Caco-2 (cell line): ENCODE measurements at regions of chr20 and their contacts with region 1.

Region 1: DNA sequence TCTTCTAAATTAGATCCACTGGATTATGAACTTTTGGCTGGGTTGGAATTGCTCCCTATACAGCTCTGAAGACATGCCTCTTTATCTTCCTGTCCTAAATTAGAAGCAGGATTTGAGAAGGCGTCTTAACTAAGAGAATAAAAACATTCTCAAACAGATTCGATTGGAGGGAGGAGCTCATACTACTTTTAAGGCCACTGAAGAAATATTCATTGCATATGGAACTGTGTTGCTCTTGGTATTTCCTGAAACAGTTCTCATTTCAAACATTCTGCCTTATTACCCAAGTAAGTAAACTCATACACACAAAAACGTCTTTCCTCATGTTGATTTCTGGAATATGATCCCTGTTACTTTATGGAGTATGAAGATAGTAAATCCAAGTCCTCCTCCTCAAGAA is 519.7 kb upstream of the CDH4 start:
- DNase-seq: no peak
- H3K4me3 ChIP-seq: no peak overlapping the region
- H3K4me3 Mint-ChIP-seq: no peak overlapping the region
- H3K27ac Mint-ChIP-seq: no peak overlapping the region
- H3K4me1 ChIP-seq: no peaks in the 10 kb centered on the region
- H3K4me1 Mint-ChIP-seq: no peaks in the 10 kb centered on the region
- H3K27me3 ChIP-seq: no peaks in the 10 kb centered on the region
- H3K27me3 Mint-ChIP-seq: peaks cover 10% of the 10 kb centered on the region
- CTCF ChIP-seq: no peak

Region 2: DNA sequence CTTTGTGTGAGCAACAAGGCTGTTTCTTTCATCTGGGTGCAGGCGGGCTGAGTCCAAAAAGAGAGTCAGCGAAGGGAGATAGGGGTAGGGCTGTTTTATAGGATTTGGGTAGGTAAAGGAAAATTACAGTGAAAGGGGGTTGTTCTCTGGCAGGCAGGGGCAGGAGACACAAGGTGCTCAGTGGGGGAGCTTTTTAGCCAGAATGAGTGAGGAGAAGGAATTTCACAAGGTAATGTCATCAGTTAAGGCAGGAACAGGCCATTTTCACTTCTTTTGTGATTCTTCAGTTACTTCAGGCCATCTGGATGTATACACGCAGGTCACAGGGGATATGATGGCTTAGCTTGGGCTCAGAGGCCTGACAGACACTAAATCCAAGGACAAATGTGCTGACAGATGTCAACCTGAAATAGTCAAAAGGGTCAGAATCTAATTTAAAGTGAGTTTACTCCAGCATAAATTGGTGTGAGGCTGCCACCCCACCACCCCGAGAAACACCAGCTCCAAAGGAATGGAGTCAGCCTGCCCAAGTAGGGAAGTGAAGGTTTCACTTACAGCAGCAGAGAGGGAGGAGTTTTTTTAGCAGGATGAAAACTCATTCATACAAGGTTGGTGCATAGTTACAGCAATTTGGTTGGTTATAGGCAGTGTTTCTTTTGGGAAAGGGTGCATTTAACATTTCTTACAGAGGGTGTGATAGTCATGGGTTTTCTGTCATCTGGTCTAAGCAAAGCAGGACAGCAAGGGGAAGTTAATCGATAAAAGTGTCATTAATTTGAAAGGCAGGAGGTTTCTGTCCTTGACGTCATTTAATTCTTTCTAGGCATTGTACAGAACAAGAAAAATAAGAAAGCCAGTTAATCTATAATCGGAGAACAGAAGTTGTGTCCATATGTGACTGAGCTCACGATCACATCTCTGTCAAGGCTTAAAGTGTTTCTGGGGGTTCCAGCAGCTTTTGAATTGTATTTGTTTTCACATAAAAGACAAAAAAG is 40.1 kb before region 1 on chr20:
- CTCF ChIA-PET with region 1: no interaction called
- POLR2A ChIA-PET with region 1: no interaction called
- intact Hi-C with region 1: loop called (anchors 1 kb)
- DNase-seq: no peak
- H3K4me3 ChIP-seq: no peak overlapping the region
- H3K4me3 Mint-ChIP-seq: no peak overlapping the region
- H3K27ac Mint-ChIP-seq: no peak overlapping the region
- H3K4me1 ChIP-seq: no peaks in the 10 kb centered on the region
- H3K4me1 Mint-ChIP-seq: no peaks in the 10 kb centered on the region
- H3K27me3 ChIP-seq: no peaks in the 10 kb centered on the region
- H3K27me3 Mint-ChIP-seq: peaks cover 22% of the 10 kb centered on the region
- CTCF ChIP-seq: no peak

Region 3: DNA sequence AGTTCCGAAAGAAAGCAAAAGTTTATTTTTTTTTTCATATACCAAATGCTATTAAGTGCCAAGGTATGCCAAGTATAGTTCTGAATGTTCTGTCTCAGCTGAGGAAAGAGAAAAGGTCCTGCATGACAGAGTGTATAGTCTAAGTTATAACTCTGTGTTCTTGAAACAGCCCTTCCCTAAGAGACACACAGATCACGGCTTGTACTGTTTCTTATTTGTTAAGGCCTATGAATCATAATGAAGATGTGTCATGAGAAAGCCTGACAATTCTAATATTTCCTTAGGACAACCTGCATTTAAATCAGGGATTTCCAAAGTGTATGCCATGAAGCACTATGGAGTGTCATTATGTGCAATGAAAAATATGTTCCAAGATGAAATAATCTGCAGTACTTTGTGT is 18.9 kb before region 1 on chr20:
- CTCF ChIA-PET with region 1: no interaction called
- POLR2A ChIA-PET with region 1: no interaction called
- intact Hi-C with region 1: no loop called
- DNase-seq: no peak
- H3K4me3 ChIP-seq: no peak overlapping the region
- H3K4me3 Mint-ChIP-seq: no peak overlapping the region
- H3K27ac Mint-ChIP-seq: no peak overlapping the region
- H3K4me1 ChIP-seq: no peaks in the 10 kb centered on the region
- H3K4me1 Mint-ChIP-seq: no peaks in the 10 kb centered on the region
- H3K27me3 ChIP-seq: no peaks in the 10 kb centered on the region
- H3K27me3 Mint-ChIP-seq: peaks cover 13% of the 10 kb centered on the region
- CTCF ChIP-seq: no peak

Region 4: DNA sequence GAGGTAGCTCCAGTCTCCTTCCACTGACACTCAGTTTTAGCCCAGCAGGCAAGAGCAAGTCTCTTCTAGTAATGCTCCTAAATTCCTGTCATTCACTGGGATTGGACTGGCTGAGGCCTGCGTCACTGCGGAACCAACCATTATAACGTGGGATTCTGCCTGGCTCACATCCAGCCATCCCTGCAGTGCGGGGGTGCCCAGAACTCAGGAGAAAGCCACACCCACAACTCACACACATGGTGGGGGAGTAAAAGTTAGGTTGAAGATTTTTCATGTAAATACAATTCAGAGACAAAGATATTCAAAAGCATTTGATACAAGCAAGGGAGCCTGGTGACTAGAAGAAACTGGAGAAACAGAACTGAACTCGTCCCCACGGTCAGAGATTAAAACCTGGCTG is 15.8 kb after region 1 on chr20:
- CTCF ChIA-PET with region 1: no interaction called
- POLR2A ChIA-PET with region 1: no interaction called
- intact Hi-C with region 1: no loop called
- DNase-seq: no peak
- H3K4me3 ChIP-seq: no peak overlapping the region
- H3K4me3 Mint-ChIP-seq: no peak overlapping the region
- H3K27ac Mint-ChIP-seq: no peak overlapping the region
- H3K4me1 ChIP-seq: no peaks in the 10 kb centered on the region
- H3K4me1 Mint-ChIP-seq: no peaks in the 10 kb centered on the region
- H3K27me3 ChIP-seq: no peaks in the 10 kb centered on the region
- H3K27me3 Mint-ChIP-seq: peaks cover 14% of the 10 kb centered on the region
- CTCF ChIP-seq: no peak

Region 5: DNA sequence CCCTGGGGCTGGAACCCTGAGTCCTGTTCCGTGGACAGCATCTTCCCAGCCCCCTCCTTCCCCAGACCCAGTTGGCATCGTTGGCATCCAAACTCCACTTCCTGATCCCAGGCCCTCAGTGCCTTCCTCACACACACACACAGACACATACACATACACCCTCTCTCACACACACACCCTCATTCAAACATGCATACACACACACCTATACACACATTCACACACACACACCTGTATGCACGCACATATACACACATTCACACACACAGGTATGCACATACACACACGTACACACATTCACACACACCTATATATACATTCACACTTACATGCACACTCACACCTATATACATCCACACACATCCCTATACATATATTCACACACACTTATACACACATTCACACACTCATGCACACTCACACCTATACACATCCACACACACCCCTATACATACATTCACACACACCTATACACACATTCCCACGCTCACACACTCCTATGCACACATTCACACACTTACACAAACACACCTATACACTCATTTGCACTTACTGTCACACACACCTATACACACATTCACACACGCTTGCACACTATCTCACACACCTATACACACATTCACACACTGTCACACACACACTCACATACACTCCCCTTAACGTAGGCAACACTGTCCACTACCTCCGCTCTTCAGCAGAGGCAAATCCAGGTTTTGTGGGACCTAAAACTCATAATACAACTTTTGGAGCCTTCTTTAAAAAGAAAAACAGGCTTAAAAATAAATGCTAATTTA is 31.8 kb after region 1 on chr20:
- CTCF ChIA-PET with region 1: no interaction called
- POLR2A ChIA-PET with region 1: no interaction called
- intact Hi-C with region 1: loop called (anchors 1 kb)
- DNase-seq: no peak
- H3K4me3 ChIP-seq: no peak overlapping the region
- H3K4me3 Mint-ChIP-seq: no peak overlapping the region
- H3K27ac Mint-ChIP-seq: no peak overlapping the region
- H3K4me1 ChIP-seq: no peaks in the 10 kb centered on the region
- H3K4me1 Mint-ChIP-seq: no peaks in the 10 kb centered on the region
- H3K27me3 ChIP-seq: no peaks in the 10 kb centered on the region
- H3K27me3 Mint-ChIP-seq: peaks cover 3% of the 10 kb centered on the region
- CTCF ChIP-seq: no peak